ENCODE measurements at regions of chr20 and their contacts with region 1.

Region 1: DNA sequence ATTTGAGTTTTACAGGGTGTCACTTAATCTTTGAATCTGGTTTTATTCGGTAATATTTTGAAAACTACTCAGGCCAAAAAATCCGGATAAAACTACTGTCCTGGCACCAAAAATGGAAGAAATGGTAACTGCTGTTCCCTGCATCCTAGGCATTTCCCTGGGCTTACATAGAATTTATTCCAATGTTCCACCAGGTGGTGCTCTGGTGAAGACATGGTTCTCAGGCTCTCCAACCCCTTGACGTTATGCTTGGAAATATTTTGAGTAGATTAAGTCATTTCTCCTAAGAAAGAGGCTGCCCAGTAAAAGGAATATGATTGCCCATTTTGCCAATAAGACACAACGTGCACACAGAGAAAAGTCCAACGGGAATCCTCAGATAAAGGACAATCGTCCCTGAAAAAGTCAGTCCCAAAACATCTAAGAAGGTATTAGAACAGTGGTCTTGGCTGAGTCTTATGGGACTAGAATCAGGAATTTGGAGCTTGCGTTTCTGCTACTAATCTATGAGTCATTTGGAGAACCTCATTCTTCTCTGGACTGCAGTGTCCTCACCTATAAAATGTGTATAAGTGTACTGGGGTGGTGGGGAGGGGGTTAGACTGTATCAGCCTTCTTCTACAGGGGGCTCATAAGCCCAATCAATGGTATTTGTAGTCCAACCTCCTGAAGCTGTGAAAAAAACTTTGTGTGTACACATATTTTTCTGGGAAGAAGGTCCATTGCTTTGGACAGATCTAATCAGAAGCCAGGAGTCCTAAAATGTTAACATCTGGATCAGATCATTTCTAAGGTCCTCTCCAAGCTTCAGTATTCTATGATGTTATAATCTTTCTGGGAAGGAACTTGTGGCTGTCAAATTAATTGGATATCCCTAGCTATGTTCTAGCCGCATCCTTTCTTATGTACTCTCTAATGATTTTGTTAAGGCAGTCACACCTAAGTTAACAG is 131.0 kb upstream of the BMP2 start:
- DNase-seq: peak; percentile 64
- H3K4me3 ChIP-seq: no peak overlapping the region
- H3K27ac ChIP-seq: no peak overlapping the region
- H3K4me1 ChIP-seq: peaks cover 16% of the 10 kb centered on the region
- H3K27me3 ChIP-seq: no peaks in the 10 kb centered on the region
- CTCF ChIP-seq: peak; percentile 65 to 74

Region 2: GRCh38 chr20:6178537-6178936 is 457.9 kb before region 1 on chr20:
- CTCF ChIA-PET with region 1: interaction called, 3 read pairs
- dilution Hi-C with region 1: no loop called
- in situ Hi-C with region 1: no loop called
- intact Hi-C with region 1: loop called (anchors 5 kb)
- DNase-seq: peak; percentile 32
- H3K4me3 ChIP-seq: no peak overlapping the region
- H3K27ac ChIP-seq: no peak overlapping the region
- H3K4me1 ChIP-seq: no peaks in the 10 kb centered on the region
- H3K27me3 ChIP-seq: peaks cover 3% of the 10 kb centered on the region
- CTCF ChIP-seq: peak; percentile 36 to 64

Region 3: GRCh38 chr20:6533761-6534479 is 102.6 kb before region 1 on chr20:
- CTCF ChIA-PET with region 1: no interaction called
- dilution Hi-C with region 1: no loop called
- in situ Hi-C with region 1: no loop called
- intact Hi-C with region 1: no loop called
- DNase-seq: peak; percentile 64
- H3K4me3 ChIP-seq: peak overlapping the region; percentile 11 to 35 (median 34)
- H3K27ac ChIP-seq: peak overlapping the region; percentile 31
- H3K4me1 ChIP-seq: peaks cover 15% of the 10 kb centered on the region
- H3K27me3 ChIP-seq: no peaks in the 10 kb centered on the region
- CTCF ChIP-seq: no peak

Region 4: GRCh38 chr20:6583134-6583738 is 53.2 kb before region 1 on chr20:
- CTCF ChIA-PET with region 1: no interaction called
- dilution Hi-C with region 1: no loop called
- in situ Hi-C with region 1: no loop called
- intact Hi-C with region 1: loop called (anchors 1 kb)
- DNase-seq: peak; percentile 58
- H3K4me3 ChIP-seq: no peak overlapping the region
- H3K27ac ChIP-seq: no peak overlapping the region
- H3K4me1 ChIP-seq: peaks cover 10% of the 10 kb centered on the region
- H3K27me3 ChIP-seq: no peaks in the 10 kb centered on the region
- CTCF ChIP-seq: peak; percentile 72 to 80

Region 5: DNA sequence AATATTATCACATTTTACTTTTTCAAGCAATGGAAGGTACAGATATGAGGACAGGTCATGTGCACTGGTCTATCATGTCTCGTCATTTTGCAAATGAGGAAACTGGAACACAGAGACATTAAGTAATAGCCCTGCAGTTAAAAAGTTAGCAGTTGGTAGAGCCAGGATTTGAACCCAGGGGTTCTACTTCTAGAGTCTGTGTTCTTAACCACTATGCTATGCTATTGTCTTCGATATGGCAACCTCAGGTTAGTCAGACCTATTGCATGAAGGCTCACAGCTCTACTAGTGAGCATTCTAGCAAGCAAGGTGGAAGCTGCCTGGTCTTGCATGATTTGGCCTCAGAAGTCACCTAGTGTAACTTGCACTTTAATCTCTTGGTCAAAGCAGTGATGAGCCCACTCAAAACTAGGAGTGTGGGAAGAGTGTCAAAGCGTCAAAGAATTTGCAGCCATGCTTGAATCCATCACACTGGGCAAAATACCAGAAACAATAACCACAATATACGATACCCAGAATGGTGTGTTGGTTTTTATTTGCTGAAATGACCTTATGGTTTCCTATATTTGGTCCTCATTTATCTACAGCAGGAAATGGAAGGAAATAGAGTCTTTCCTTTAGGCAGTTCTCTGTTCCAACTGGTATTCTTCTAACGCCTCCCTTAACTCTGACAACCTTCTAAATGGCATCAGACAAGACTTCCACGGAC is 110.6 kb after region 1 on chr20:
- CTCF ChIA-PET with region 1: no interaction called
- dilution Hi-C with region 1: no loop called
- in situ Hi-C with region 1: no loop called
- intact Hi-C with region 1: loop called (anchors 5 kb)
- DNase-seq: peak; percentile 90
- H3K4me3 ChIP-seq: no peak overlapping the region
- H3K27ac ChIP-seq: no peak overlapping the region
- H3K4me1 ChIP-seq: no peaks in the 10 kb centered on the region
- H3K27me3 ChIP-seq: no peaks in the 10 kb centered on the region
- CTCF ChIP-seq: no peak

Region 6: DNA sequence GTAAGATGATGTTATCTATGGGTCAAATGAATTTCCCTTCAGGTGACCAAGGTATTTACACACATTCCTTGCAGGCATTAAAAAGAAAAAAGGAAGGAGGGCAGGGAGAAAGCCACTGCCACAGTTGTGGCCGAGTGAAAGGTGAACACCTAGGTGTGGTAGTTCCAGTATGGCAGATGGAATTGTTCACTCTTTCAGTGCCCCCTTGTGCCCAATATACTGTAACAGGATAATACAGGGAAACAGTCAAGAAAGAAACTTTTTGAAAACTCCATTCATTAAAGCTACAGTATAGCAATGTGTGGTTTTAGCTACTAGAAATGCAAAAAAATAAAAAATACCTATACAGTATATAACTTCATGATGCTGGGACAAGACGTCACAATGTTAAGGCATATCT is 183.1 kb after region 1 on chr20:
- CTCF ChIA-PET with region 1: no interaction called
- dilution Hi-C with region 1: no loop called
- in situ Hi-C with region 1: no loop called
- intact Hi-C with region 1: loop called (anchors 1 kb)
- DNase-seq: no peak
- H3K4me3 ChIP-seq: no peak overlapping the region
- H3K27ac ChIP-seq: no peak overlapping the region
- H3K4me1 ChIP-seq: no peaks in the 10 kb centered on the region
- H3K27me3 ChIP-seq: no peaks in the 10 kb centered on the region
- CTCF ChIP-seq: peak; percentile 44

Region 7: DNA sequence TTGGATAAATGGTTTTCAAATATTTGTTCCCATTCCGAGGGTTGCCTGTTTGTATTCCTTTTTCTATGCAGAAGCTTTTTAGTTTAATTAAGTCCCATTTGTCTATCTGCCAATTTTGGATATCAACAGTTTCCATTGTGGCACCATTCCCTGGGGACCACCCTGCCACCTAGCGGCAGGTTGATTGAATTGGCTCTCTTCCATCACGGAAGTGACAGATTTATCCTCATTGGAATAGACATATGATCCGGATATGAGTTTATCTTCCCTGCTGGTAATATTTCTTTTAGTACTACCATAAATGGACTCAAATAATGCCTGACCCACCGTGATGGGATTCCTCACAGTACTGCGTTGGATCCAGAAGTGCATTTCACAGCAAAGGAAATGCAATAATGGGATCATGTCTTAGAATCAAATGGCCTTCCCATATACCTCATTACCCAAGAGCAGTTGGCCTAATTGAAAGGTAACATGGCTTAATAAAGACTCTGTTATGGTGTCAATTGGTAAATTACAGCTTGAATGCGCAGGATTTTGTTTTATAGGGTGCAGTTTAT is 458.0 kb after region 1 on chr20:
- CTCF ChIA-PET with region 1: no interaction called
- dilution Hi-C with region 1: no loop called
- in situ Hi-C with region 1: no loop called
- intact Hi-C with region 1: loop called (anchors 10 kb)
- DNase-seq: peak; percentile 62
- H3K4me3 ChIP-seq: no peak overlapping the region
- H3K27ac ChIP-seq: no peak overlapping the region
- H3K4me1 ChIP-seq: no peaks in the 10 kb centered on the region
- H3K27me3 ChIP-seq: no peaks in the 10 kb centered on the region
- CTCF ChIP-seq: peak; percentile 69 to 77

Measured in mammary epithelial cell (primary cell).